ENCODE measurements at regions of chr9 and their contacts with region 1.

Region 1: DNA sequence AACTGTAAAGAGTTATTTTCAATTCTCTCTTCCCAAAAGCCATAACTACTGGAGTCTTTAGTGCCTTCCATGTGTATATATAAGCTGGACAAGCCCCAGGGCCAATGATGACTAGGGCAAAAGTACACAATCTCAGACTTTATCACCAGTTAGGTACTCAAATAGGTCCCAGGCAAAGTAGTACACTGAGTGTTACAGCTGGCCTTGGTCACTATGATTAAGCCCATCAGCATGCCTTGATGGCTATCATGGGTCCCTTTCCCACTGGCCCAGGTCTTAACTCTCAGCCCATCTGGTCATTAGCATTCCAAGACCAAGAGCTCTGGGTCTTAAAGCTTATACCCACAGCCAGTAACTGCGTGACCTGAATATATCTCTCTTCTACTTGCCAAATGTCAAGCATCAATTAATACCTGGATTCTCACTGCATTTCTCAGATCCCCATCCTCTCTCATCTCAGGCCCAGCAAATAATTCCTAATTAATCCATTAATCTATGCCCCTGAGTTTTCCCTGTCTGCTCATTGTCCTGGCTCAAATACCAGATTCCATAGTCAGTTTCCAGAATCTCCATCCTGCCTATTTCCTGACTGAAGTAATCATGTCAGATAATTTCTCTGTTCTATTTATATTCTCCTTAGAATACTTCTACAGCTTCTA is 62.3 kb downstream of the NR6A1 start:
- DNase-seq: no peak
- H3K4me3 ChIP-seq: no peak overlapping the region
- H3K27ac ChIP-seq: no peak overlapping the region
- H3K4me1 ChIP-seq: peaks cover 4% of the 10 kb centered on the region
- CTCF ChIP-seq: no peak

Region 2: GRCh38 chr9:124419832-124420489 is 288.8 kb before region 1 on chr9:
- CTCF ChIA-PET with region 1: no interaction called
- POLR2A ChIA-PET with region 1: no interaction called
- intact Hi-C with region 1: loop called (anchors 1 kb)
- DNase-seq: no peak
- H3K4me3 ChIP-seq: no peak overlapping the region
- H3K27ac ChIP-seq: no peak overlapping the region
- H3K4me1 ChIP-seq: peaks cover 4% of the 10 kb centered on the region
- CTCF ChIP-seq: peak; percentile 46; the same call in 1 of the 2 replicates

Region 3: DNA sequence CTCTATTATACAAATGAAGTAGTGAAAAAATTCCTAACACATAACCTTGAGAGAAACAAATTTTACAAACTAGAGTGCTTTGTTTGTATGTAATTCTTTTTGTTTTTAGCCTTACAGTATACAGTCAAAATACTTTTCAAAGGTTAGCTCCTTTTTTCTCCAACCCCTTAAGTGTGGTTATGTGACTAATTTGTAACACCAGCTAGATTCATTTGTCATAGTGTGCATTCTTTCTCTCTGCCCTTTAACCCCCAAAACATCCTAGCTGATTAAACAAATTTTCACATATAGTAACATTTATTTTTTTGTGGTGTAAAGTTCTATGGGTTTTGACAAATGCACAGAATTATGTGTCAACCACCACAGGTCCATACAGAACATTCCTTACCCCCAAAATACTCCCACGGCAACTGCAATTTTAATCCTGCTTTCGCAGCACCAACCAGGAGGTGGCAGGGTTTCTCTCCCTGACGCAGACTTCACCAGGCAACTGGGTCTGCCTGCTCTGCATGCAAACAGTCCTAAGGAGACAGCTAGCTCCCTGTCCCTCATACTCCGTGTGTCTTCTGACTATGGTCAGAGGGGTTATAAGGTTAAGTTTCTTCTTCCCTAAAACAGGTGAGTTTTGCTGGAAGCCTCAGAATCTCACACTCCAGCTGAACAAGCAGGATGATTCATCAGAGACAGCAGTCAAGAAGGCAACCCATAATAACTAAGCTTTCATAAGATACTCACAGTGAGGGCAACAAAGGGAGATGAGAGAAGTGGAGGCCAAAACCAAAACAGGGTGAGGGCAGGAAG is 157.1 kb before region 1 on chr9:
- CTCF ChIA-PET with region 1: no interaction called
- POLR2A ChIA-PET with region 1: no interaction called
- intact Hi-C with region 1: loop called (anchors 5 kb)
- DNase-seq: peak; percentile 33
- H3K4me3 ChIP-seq: no peak overlapping the region
- H3K27ac ChIP-seq: no peak overlapping the region
- H3K4me1 ChIP-seq: no peaks in the 10 kb centered on the region
- CTCF ChIP-seq: peak; percentile 76

Region 4: GRCh38 chr9:124617471-124618141 is 91.2 kb before region 1 on chr9:
- CTCF ChIA-PET with region 1: interaction called, 8 read pairs
- POLR2A ChIA-PET with region 1: no interaction called
- intact Hi-C with region 1: loop called (anchors 1 kb)
- DNase-seq: peak; percentile 76
- H3K4me3 ChIP-seq: no peak overlapping the region
- H3K27ac ChIP-seq: no peak overlapping the region
- H3K4me1 ChIP-seq: peaks cover 6% of the 10 kb centered on the region
- CTCF ChIP-seq: peak; percentile 98

Region 5: DNA sequence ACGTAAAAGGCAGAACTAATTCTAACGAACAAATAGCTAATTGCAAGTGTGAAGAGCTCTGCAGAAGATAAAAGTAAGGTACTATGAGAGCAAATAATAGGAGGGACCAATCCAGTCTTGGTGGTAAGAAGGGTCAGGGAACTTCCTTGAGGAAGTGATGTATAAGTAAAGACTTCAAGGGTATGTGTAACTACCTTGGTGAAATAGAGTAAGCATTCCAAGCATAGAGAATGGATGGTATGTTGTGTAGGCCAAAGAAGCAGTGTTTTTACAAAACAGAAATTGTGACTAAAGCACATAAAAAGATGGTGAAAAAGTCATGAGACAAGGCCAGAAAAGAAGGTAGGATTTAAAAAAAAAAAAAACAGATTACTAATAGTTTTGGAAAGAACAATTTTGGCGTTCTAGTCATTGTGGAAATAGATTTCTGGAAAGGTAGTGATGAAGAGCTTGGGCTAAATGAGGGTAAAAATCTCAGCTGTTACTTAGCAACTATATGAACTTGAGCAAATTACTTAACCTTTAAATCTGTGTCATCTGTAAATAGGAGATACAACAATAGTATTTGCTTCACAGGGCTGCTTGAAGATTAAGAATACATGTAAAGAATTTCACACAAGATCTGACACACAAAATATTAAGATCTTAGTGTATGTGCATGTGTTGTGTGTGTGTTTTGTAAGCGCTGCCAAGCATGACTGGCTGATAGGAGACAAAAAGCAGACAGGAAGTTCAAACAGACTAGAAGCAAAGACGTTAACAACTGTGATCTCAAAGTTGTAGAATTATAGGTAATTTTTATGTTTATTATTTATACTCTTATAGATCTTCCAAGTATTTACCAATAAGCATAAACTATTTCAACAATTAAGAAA is 11.2 kb before region 1 on chr9:
- CTCF ChIA-PET with region 1: no interaction called
- POLR2A ChIA-PET with region 1: no interaction called
- intact Hi-C with region 1: no loop called
- DNase-seq: no peak
- H3K4me3 ChIP-seq: no peak overlapping the region
- H3K27ac ChIP-seq: no peak overlapping the region
- H3K4me1 ChIP-seq: no peaks in the 10 kb centered on the region
- CTCF ChIP-seq: no peak

Region 6: DNA sequence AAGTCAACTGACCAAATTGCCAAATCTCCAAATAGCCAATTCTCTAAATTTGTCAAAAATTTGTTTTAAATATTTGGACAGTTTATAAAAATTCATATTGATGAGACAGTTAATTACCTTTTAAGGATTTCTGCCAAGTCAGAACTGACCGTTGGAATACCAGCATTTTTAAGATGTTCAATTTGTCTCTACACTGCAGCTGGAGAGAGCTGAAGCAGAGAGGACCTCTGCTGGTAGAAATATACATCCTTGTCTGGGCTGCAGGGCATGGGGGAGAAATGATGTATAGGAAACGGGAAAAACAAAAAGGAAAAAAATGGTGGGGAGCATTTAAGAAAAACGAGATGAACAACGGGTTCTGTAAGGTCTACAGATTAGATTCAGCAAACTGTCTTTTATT is 45.5 kb after region 1 on chr9:
- CTCF ChIA-PET with region 1: no interaction called
- POLR2A ChIA-PET with region 1: no interaction called
- intact Hi-C with region 1: loop called (anchors 1 kb)
- DNase-seq: peak; percentile 25
- H3K4me3 ChIP-seq: no peak overlapping the region
- H3K27ac ChIP-seq: no peak overlapping the region
- H3K4me1 ChIP-seq: peaks cover 14% of the 10 kb centered on the region
- CTCF ChIP-seq: peak; percentile 83

Region 7: DNA sequence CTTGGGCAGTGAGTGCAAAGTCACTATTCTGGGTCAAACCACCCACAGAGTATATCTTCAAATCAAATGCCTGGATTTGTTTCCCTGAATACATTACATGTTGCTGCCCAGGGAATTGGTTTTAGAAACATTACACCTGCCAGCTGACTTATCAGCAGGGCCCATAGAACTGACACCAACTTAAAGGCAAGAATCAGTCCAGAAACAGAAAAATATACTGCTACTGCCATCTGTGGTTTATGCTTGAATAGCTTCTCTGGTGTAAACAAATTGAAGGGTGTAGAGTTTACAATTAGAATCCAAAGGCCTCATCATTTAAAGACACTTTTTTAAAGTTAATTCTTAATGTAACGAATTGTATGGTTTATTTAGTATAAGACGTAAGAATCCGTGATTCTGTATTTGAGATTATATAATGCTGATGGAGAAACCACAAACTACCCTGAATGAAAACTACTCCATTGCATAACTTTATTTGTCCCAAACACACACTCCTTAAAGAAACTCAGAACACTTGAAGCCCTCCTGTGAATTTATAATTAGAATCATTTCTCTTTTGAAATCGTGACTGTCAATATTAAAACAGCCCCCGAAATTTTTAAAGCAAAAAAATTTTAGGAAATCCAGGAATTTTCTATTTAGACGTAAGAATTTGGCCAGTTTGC is 56.1 kb after region 1 on chr9:
- CTCF ChIA-PET with region 1: no interaction called
- POLR2A ChIA-PET with region 1: interaction called, 4 read pairs
- intact Hi-C with region 1: loop called (anchors 1 kb)
- DNase-seq: peak; percentile 80
- H3K4me3 ChIP-seq: peak overlapping the region; percentile 49
- H3K27ac ChIP-seq: peak overlapping the region; percentile 56
- H3K4me1 ChIP-seq: peaks cover 69% of the 10 kb centered on the region
- CTCF ChIP-seq: peak; percentile 78

Region 8: GRCh38 chr9:124852829-124853531 is 144.2 kb after region 1 on chr9 and contains the start of gene WDR38:
- CTCF ChIA-PET with region 1: no interaction called
- POLR2A ChIA-PET with region 1: no interaction called
- intact Hi-C with region 1: loop called (anchors 5 kb)
- DNase-seq: peak; percentile 76
- H3K4me3 ChIP-seq: peak within 1 kb of the TSS; percentile 63
- H3K27ac ChIP-seq: no peak within 1 kb of the TSS
- H3K4me1 ChIP-seq: peaks cover 11% of the 10 kb centered on the region
- CTCF ChIP-seq: peak; percentile 94
- total RNA-seq, gene WDR38: not detected in 2 replicates

Measured in OCI-LY7 (cell line).